CD14-positive monocyte (primary cell): ENCODE measurements at regions of chr10 and their contacts with region 1.

Region 1: DNA sequence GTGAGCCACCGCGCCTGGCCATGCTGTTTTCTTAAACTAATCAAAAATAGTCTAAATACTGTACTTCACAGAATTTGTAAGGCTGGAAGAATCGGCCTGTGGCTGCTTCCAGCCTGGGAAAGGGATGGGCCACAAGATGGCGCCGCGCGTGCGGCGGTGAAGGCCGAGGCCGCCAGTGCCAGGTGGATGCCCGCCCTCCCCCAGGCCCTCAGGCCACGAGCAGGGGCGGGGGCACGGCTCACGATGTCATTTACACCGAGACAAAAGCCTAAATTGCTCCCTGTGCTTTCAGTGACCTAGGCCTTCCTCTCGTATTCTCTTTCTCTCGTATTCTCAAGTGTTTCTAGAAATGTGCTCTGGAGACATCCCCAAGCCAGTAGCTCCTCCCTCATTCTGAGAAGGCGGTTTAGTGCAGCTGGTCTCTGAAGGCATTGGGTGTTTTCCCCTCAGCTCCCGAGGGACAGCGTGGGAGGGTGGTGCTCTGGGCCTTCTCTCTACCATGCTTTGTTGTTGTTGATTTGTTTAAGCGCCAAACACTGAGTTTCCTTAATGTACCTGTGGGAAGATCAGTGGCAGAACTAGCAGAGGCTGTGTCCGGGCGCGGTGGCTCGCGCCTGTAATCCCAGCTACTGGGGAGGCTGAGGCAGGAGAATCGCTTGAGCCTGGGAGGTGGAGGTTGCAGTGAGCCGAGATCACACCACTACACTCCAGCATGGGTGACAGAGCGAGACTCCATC is 68.4 kb downstream of the CDC123 start:
- DNase-seq: peak; percentile 47 to 59 (median 57)
- H3K4me3 ChIP-seq: peak overlapping the region; percentile 4 to 50 (median 12)
- H3K4me3 Mint-ChIP-seq: peak overlapping the region; percentile 72 to 80
- H3K27ac ChIP-seq: peak overlapping the region; percentile 4 to 41
- H3K27ac Mint-ChIP-seq: peak overlapping the region; percentile 34 to 92 (median 86)
- H3K4me1 ChIP-seq: peaks cover 40 to 45% of the 10 kb centered on the region in 2 donors
- H3K4me1 Mint-ChIP-seq: peaks cover 40% of the 10 kb centered on the region
- H3K27me3 ChIP-seq: no peaks in the 10 kb centered on the region
- H3K27me3 Mint-ChIP-seq: peaks cover 0 to 2% (median 1%) of the 10 kb centered on the region in 3 donors
- CTCF ChIP-seq: peak; percentile 74

Region 2: DNA sequence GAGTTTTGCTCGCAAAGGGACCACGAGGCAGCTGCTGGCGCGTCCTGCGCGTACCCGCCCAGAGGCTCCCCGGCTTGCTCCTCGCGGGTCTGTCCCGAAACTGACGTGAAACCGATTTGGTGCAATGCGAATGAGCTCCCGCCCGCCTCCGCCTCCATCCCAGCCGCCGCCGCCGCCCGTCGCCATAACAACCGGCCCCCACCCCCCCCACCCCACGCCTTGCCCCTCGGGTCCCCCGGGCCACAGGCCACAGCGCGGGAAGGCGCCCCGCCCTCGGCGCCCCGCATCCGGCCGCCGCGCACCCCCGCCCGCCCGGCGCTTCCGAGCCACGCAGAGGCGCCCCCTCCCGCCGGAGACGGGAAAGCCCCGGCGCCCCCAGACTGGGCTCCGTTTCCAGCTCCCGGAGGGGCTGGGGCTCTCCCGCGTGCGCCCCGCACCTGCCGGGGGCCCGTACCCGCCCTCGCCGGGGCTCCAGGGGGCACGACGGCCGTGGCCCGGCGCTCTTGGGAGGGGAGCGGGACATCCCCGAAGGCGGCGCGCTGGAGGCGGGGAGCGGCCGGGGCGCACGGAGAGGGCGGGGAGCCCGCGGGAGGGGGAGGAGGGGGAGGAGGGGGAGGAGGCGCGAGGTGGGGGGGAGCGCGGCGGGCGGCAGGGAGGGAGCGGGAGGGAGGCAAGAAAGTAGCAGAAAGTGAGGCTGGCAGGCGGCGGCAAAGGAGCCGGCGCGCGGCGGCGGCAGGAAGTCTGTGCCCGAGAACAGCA is 84.7 kb after region 1 on chr10 and contains the start of gene CAMK1D:
- intact Hi-C with region 1: loop called in 1 of 2 experiments (anchors 5 kb)
- DNase-seq: peak; percentile 33 to 82 (median 80)
- H3K4me3 ChIP-seq: peak within 1 kb of the TSS; percentile 61 to 87 (median 83)
- H3K4me3 Mint-ChIP-seq: peak within 1 kb of the TSS; percentile 98 to 99
- H3K27ac ChIP-seq: peak within 1 kb of the TSS; percentile 56 to 79
- H3K27ac Mint-ChIP-seq: peak within 1 kb of the TSS; percentile 88 to 96 (median 93)
- H3K4me1 ChIP-seq: peaks cover 22 to 25% of the 10 kb centered on the region in 2 donors
- H3K4me1 Mint-ChIP-seq: peaks cover 29% of the 10 kb centered on the region
- H3K27me3 ChIP-seq: peaks cover 9 to 38% of the 10 kb centered on the region in 2 donors
- H3K27me3 Mint-ChIP-seq: peaks cover 45 to 51% (median 51%) of the 10 kb centered on the region in 3 donors
- CTCF ChIP-seq: peak; percentile 31
- polyA plus RNA-seq, gene CAMK1D: 6.7 to 11.8 (median 7.1) TPM

Region 3: DNA sequence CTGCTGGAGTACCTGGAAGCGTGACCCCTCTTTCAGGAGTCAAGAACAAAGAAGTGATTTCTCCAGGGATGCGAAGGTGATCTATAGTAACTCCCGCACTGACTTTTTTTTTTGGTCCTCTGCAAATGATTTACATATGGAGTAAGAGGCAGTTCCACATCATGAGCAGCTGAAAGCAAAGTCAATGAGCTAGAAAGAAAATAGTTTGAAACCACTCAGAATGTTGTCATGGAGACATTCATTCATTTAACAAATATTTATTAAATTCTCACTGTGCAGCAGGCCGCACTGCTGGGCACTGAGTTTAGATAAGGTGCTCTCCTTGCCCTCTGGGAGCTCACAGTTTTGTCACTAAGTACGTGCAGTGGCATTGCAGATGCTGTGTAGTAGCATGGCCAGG is 291.7 kb after region 1 on chr10:
- intact Hi-C with region 1: no loop called
- DNase-seq: no peak
- H3K4me3 ChIP-seq: no peak overlapping the region
- H3K4me3 Mint-ChIP-seq: no peak overlapping the region
- H3K27ac ChIP-seq: no peak overlapping the region
- H3K27ac Mint-ChIP-seq: no peak overlapping the region
- H3K4me1 ChIP-seq: peaks cover 0 to 2% of the 10 kb centered on the region in 2 donors
- H3K4me1 Mint-ChIP-seq: peaks cover 1% of the 10 kb centered on the region
- H3K27me3 ChIP-seq: no peaks in the 10 kb centered on the region
- H3K27me3 Mint-ChIP-seq: no peaks in the 10 kb centered on the region
- CTCF ChIP-seq: no peak

Region 4: DNA sequence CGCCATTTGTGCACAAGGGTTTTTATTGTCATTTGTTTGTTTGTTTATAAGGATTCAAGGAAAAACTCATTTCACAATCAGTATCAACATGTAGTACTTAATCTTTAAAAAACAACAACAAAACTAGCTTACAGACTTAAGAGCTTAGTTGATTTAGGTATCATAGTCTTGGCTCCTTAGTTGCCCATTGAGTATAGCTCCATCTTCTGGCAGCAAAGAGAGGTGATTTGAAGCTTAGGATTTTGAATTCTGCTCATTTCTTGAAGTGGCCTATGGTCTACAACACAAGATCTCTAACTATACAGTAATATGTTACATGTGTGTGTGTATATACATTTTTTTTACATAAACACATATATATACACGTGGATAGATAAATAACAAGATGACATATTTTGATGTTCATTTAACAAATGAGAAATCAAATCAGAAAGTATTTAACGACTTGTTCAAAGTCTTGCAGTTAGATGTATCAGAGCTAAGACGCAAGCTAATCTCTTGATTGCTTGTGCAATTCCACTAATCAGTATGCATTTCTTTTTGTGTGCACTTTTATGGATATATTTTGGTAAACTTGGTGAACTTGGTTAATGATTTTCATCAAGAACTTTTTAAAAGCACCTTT is 392.3 kb after region 1 on chr10:
- intact Hi-C with region 1: loop called (anchors 10 kb)
- DNase-seq: peak; percentile 15 to 36 (median 30)
- H3K4me3 ChIP-seq: no peak overlapping the region
- H3K4me3 Mint-ChIP-seq: no peak overlapping the region
- H3K27ac ChIP-seq: no peak overlapping the region
- H3K27ac Mint-ChIP-seq: no peak overlapping the region
- H3K4me1 ChIP-seq: no peaks in the 10 kb centered on the region
- H3K4me1 Mint-ChIP-seq: no peaks in the 10 kb centered on the region
- H3K27me3 ChIP-seq: no peaks in the 10 kb centered on the region
- H3K27me3 Mint-ChIP-seq: no peaks in the 10 kb centered on the region
- CTCF ChIP-seq: peak; percentile 71